HEK293 (cell line): ENCODE measurements at regions of chr18 and their contacts with region 1.

Region 1: DNA sequence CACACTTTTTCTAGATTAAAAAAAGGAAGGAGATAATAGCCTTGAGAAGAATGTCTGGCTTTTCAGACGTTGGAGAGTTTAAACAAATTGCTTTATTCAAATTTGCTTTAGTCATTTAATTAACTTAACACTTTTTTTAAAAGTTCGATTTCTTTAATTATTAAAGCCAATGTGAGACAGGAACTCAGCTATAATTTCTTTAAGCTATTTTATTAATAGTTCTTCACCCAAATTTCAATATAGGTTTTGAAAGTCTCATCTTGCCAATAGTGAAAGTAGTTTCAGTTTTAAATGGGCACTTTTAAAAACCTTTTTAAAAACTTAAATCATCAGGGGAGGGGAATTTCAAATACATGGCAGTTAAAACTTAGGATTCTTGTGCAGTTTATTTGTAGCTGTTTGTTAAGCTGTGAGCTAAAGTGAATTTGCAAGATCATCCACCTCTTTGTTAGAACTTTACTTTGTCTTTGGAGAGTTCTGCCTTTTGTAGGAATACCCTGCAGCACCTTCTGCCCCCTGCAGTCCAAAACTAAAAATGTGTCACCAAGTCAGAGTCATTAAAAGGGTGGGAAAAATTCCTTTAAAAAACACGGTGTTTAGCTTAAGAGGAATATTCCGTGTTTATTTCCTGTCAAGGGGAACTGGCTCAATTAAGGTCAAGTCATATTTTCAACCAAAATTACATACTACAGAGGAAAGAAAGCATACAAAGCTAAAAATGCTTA is 4.6 kb downstream of the TGIF1 start:
- H3K4me3 ChIP-seq: no peak overlapping the region; the same call in 1 of the 2 replicates
- H3K27ac ChIP-seq: no peak overlapping the region
- H3K4me1 ChIP-seq: peaks cover 14% of the 10 kb centered on the region; the same call in 1 of the 2 replicates
- CTCF ChIP-seq: peak; percentile 43

Region 2: GRCh38 chr18:3297025-3297984 is 157.2 kb before region 1 on chr18:
- CTCF ChIA-PET with region 1: interaction called, 16 read pairs
- POLR2A ChIA-PET with region 1: interaction called, 26 read pairs
- H3K4me3 ChIP-seq: peak overlapping the region; percentile 59
- H3K27ac ChIP-seq: peak overlapping the region; percentile 85
- H3K4me1 ChIP-seq: peaks cover 4% of the 10 kb centered on the region; the same call in 1 of the 2 replicates
- CTCF ChIP-seq: peak; percentile 91

Region 3: DNA sequence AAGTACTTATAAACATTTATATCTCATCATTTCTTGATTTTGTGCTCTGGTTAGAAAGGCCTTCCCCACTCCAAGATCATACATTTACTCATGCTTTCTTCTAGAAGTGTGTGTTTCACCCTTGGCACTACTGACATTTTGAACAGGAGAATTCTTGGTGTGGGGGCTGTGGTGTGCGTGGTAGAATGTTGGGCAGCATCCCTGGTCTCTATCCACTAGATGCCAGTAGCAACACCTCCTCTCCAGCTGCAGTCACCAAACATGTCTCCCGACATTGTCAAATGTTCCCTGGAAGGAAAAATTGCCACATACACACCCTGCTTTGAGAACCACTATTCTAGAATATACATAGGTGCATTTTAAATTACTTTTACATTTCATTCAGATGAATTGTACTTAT is 13.2 kb before region 1 on chr18:
- CTCF ChIA-PET with region 1: interaction called, 12 read pairs
- POLR2A ChIA-PET with region 1: interaction called, 10 read pairs
- H3K4me3 ChIP-seq: no peak overlapping the region
- H3K27ac ChIP-seq: no peak overlapping the region
- H3K4me1 ChIP-seq: peaks cover under 1% of the 10 kb centered on the region; the same call in 1 of the 2 replicates
- CTCF ChIP-seq: peak; percentile 37; the same call in 1 of the 2 replicates

Region 4: GRCh38 chr18:3466045-3466444 is 11.5 kb after region 1 on chr18:
- CTCF ChIA-PET with region 1: interaction called, 20 read pairs
- POLR2A ChIA-PET with region 1: interaction called, 6 read pairs
- H3K4me3 ChIP-seq: no peak overlapping the region
- H3K27ac ChIP-seq: no peak overlapping the region
- H3K4me1 ChIP-seq: no peaks in the 10 kb centered on the region
- CTCF ChIP-seq: no peak

Region 5: GRCh38 chr18:3511922-3512372 is 57.4 kb after region 1 on chr18:
- CTCF ChIA-PET with region 1: interaction called, 10 read pairs
- POLR2A ChIA-PET with region 1: interaction called, 3 read pairs
- H3K4me3 ChIP-seq: no peak overlapping the region
- H3K27ac ChIP-seq: no peak overlapping the region
- H3K4me1 ChIP-seq: peaks cover 6% of the 10 kb centered on the region; the same call in 1 of the 2 replicates
- CTCF ChIP-seq: no peak

Region 6: DNA sequence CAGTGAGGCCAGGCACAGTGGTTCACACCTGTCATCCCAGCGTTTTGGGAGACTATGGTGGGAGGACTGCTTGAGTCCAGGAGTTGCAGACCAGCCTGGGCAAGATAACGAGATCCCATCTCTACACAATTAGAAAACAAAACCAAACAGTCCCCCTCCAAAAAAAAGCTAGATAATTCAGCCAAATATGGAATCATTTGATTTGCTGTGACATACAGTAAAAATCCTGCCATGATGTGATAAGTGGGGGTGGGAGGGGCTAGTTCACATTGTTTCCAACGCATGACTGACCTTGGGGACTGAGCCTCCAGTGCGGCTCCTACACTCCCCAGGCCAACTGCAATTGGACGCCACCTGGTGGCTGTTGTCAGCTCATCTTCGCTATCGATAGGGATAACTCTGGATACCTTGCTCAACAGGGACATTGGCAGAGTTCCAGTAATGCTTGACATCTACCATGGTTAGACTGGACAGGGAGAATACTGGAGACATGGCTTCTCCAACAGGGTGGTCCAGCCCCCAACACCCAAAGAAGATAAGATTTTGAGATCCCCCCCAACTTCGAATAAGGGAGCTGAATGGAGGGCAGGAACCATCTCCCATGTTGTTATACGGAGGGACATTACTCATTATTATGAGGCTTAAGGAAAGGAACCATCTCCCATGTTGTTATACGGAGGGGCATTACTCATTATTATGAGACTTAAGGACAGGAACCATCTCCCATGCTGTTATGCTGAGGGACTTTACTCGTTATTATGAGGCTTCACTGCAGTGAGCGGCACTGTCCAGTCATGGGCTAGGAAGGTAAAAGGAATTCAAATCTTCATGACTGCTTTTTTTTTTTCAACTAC is 131.4 kb after region 1 on chr18:
- CTCF ChIA-PET with region 1: interaction called, 32 read pairs
- POLR2A ChIA-PET with region 1: interaction called, 12 read pairs
- H3K4me3 ChIP-seq: no peak overlapping the region
- H3K27ac ChIP-seq: no peak overlapping the region
- H3K4me1 ChIP-seq: no peaks in the 10 kb centered on the region; the same call in 1 of the 2 replicates
- CTCF ChIP-seq: peak; percentile 63

Region 7: DNA sequence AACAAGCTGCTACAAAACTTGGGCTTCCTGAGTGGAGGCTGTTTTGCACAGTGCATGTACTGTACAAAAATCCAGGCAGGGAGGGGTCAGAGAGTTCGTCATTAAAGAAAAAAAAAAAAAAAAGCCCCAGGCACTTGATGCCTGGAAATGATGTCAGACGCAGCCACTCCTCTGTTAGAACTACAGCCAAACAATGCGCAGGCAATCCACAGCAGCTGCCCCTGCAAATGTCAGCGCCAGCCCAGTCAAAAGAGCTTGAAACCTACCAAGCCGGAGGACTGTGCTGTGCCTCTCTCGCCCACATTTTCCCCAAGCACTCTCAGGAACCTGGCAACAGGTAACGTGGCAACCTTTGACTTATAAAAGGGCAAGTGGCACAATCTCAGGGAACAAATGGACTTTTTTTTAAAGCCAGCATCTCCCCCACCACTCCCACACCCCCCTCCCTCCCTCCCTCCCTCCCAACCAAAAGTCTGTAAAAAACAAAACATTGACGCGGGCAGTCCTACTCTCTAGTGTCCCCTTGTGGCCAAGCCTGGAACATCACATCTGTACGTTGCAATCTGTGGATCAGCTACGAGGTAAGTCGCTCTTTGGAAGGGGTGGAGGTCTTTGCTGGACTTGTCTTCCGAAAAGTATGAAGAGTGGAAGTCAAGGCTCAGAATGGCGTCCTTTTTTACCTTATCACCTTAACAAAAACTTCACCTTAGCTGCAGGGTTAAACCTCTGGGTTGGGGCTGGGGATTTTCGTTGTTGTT is 139.6 kb after region 1 on chr18:
- CTCF ChIA-PET with region 1: interaction called, 30 read pairs
- POLR2A ChIA-PET with region 1: interaction called, 31 read pairs
- H3K4me3 ChIP-seq: peak overlapping the region; percentile 39
- H3K27ac ChIP-seq: peak overlapping the region; percentile 97
- H3K4me1 ChIP-seq: peaks cover 23% of the 10 kb centered on the region
- CTCF ChIP-seq: peak; percentile 58